ENCODE measurements at regions of chr3 and their contacts with region 1.

Region 1: GRCh38 chr3:83813176-83813575 is 1145.6 kb upstream of the CADM2 start:
- DNase-seq: no peak
- ATAC-seq: no peak
- H3K4me3 ChIP-seq: no peak overlapping the region
- H3K27ac ChIP-seq: no peak overlapping the region
- H3K4me1 ChIP-seq: no peaks in the 10 kb centered on the region
- H3K27me3 ChIP-seq: no peaks in the 10 kb centered on the region
- CTCF ChIP-seq: no peak
- EP300 ChIP-seq: no peak
- POLR2A ChIP-seq: no peak
- RAD21 ChIP-seq: no peak

Region 2: DNA sequence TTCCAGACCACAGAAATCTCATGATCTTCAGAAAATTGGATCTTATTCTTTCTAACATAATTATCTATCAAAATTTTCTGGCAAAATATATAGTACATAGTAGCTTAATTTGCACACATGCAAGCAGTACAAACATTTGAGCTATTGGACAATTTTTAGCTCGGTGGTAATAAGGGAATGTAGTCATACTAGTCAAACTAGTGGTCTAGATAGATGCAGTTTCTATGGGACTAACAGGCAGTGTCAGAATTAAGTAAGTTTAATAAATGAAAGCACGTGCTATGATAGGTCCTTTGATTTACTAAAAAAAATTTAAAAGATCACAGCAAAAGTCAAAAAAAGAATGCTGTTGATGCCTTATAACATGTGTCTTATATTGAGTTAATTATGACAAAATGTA is 351.3 kb before region 1 on chr3:
- CTCF ChIA-PET with region 1: no interaction called
- POLR2A ChIA-PET with region 1: no interaction called
- in situ Hi-C with region 1: no loop called
- intact Hi-C with region 1: no loop called
- DNase-seq: no peak
- ATAC-seq: no peak
- H3K4me3 ChIP-seq: no peak overlapping the region
- H3K27ac ChIP-seq: no peak overlapping the region
- H3K4me1 ChIP-seq: no peaks in the 10 kb centered on the region
- H3K27me3 ChIP-seq: no peaks in the 10 kb centered on the region
- CTCF ChIP-seq: no peak
- EP300 ChIP-seq: no peak
- POLR2A ChIP-seq: no peak
- RAD21 ChIP-seq: no peak

Region 3: DNA sequence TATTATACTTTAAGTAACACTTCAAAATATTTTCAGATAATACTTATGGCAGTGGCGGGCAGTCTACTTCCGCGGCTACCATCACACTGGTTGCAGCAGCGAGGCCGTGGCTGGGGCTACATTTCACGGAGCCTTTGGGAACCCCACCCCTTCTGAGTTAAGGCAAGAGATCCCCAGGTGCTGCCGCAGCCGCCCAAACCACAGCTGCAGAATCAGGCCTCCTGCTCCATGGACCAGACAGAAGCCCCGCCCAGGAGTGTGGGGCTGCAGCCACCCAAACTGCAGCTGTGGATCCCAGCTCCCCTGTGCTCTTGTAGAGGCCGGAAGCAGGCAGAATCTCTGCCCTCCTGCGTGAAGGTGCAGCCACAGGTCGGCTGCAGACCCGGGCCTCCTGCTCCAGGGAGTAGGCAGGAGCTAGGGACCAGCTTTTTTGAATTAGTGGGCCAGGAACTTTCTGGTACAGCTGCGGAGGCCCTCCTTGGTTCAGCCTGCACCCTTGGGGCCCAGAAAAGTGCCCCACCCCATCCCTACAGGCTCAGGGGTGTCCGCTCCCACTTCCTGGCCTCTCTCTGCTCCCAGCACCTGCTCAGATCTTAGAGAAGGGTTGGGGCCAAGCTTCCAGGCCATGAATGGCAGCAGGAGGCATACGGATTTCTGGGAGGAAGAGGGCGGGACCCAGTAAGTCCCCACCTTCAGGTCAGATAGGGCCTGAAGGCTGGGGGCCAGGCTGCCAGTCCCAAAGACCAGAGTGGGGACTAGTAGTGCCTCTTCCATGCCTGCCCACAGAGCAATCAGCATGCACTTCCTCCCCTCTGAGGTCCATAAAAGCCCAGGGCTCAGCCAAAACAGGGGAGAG is 43.2 kb before region 1 on chr3:
- CTCF ChIA-PET with region 1: no interaction called
- POLR2A ChIA-PET with region 1: no interaction called
- in situ Hi-C with region 1: loop called (anchors 10 kb)
- intact Hi-C with region 1: no loop called
- DNase-seq: no peak
- ATAC-seq: no peak
- H3K4me3 ChIP-seq: no peak overlapping the region
- H3K27ac ChIP-seq: no peak overlapping the region
- H3K4me1 ChIP-seq: no peaks in the 10 kb centered on the region
- H3K27me3 ChIP-seq: no peaks in the 10 kb centered on the region
- CTCF ChIP-seq: no peak
- EP300 ChIP-seq: no peak
- POLR2A ChIP-seq: no peak
- RAD21 ChIP-seq: no peak